Posterior cingulate gyrus (tissue), 11 donors: ENCODE measurements at regions of chr9 and their contacts with region 1.

Region 1: DNA sequence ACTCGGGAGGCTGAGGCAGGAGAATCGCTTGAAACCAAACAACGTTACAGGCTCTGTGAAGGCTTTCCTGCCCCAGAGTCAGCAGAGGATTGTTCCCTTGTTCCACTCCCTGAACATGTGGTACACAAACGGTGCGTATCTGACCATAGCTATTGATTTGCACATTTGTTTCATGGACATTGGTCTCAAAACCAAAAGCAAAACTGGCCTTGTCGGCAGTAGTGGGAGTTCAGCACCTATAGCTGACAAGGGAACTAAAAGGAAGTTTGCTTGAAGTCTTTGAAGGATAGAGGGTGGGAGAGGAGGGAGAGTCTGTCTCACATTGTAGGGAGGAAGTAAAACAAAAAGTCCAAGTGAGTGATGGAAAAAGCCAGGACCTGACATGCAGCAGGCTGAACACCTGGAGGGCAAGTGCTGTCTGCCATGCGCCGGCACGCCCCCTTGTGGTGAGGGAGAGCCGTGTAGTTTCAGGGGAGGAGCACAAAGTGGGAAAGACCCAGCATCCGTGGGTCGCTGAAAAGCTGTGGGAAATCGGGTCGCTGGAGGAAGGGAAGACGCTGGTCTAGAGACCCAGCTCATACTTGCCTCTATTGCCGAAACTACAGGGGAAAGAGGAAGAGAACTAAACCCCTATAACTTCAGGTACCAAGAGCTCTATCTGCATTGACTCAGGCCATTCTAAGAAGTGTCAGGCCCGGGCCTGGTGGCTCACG is 58.0 kb downstream of the RAD23B start:
- DNase-seq: peak in 9 of 10 donors; percentile 36 to 95 (median 74)

Region 2: GRCh38 chr9:107239474-107239873 is 101.6 kb before region 1 on chr9:
- intact Hi-C with region 1: loop called (anchors 5 kb)
- DNase-seq: no peak

Region 3: DNA sequence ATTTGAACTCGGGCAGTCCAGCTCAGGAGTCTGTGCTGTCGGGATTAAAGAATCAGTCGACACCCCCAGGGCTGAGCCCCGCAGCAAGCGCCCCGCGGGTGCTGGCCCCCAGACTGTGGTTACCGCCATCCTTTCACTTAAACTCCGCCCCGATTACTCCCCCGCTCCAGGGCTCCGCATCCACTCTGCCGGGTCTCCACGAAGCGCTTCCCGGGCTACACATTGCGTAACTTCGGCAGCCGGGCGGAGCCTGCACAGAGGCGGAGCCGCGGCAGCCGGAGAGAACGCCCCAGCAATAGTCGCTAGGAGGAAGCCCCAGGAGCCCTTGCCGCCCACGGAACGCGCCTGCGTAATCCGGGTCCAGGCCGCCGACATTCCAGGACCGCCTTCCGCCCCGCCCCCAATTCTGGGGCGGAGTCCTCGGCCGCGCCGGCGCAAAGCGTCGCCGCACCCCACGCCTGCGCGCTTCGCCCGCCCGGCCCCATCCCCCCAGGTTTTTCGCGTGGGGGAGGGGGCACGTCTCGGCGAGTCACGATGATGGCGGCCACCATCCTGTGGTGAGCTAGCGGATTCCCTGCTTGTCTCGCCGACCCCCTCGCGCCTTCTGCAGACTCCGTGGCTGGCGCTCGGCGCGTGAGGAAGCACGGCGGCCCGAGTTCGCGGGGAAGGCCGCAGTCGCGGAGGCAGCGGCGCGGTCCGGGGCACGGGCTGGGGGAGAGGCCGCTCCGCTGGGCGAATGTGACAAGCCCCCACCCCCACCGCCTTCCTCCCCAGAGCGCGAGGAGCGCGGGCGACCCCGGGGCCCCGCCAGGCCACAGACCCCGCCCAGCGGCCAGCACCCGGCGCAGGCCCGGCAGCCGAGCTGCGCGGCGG is 58.1 kb before region 1 on chr9 and contains the start of gene RAD23B:
- intact Hi-C with region 1: loop called (anchors 10 kb)
- DNase-seq: peak; percentile 96 to 100 (median 98)